PC-9 (cell line): ENCODE measurements at regions of chr20 and their contacts with region 1.

Region 1: GRCh38 chr20:59850018-59850641 is 83.3 kb downstream of the SYCP2 start:
- DNase-seq: no peak
- H3K4me3 ChIP-seq: no peak overlapping the region
- H3K27ac ChIP-seq: no peak overlapping the region
- H3K4me1 ChIP-seq: peaks cover 17% of the 10 kb centered on the region
- H3K27me3 ChIP-seq: no peaks in the 10 kb centered on the region
- CTCF ChIP-seq: peak; percentile 92

Region 2: DNA sequence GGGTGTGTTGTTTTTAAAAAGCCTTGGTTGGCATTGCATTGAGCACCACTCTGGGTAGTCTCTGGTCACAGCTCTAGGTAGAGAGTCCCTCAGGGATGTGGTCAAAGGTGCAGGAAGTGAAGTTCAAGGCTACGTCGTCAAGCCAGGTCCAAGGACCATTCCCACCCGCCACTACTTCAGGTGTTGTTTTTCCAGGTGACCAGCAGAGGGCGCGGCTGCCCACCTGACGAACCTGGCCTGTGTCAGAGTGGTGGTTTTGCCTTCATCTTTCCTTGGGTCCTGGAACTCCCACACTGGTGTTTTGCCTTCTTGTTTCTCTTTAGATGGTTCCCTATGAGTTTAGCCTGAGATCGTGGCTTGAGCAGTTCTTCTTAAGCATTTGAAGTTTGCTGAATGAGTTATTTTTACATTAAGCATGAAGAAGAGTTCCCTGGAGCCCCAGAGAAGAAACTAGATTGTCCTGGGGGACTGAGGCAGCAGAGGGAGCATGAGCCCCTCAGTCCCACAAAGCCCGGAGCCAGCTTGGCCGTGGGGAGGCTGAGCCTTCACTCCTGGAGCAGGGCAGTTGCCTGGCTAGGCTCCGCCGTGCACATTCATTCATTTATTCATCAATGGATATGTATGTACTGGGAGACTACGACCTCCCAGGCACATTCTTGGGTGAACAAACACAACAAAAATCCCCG is 251.4 kb before region 1 on chr20:
- CTCF ChIA-PET with region 1: no interaction called
- POLR2A ChIA-PET with region 1: no interaction called
- intact Hi-C with region 1: loop called (anchors 1 kb)
- DNase-seq: peak in 1 of 2 experiments; percentile 14
- H3K4me3 ChIP-seq: no peak overlapping the region
- H3K27ac ChIP-seq: no peak overlapping the region
- H3K4me1 ChIP-seq: no peaks in the 10 kb centered on the region
- H3K27me3 ChIP-seq: peaks cover 97% of the 10 kb centered on the region
- CTCF ChIP-seq: peak; percentile 96

Region 3: GRCh38 chr20:59743767-59744485 is 106.2 kb before region 1 on chr20:
- CTCF ChIA-PET with region 1: no interaction called
- POLR2A ChIA-PET with region 1: no interaction called
- intact Hi-C with region 1: no loop called
- DNase-seq: peak in 1 of 2 experiments; percentile 9
- H3K4me3 ChIP-seq: no peak overlapping the region
- H3K27ac ChIP-seq: no peak overlapping the region
- H3K4me1 ChIP-seq: no peaks in the 10 kb centered on the region
- H3K27me3 ChIP-seq: peaks cover 100% of the 10 kb centered on the region
- CTCF ChIP-seq: peak; percentile 28; the same call in 1 of the 2 replicates

Region 4: DNA sequence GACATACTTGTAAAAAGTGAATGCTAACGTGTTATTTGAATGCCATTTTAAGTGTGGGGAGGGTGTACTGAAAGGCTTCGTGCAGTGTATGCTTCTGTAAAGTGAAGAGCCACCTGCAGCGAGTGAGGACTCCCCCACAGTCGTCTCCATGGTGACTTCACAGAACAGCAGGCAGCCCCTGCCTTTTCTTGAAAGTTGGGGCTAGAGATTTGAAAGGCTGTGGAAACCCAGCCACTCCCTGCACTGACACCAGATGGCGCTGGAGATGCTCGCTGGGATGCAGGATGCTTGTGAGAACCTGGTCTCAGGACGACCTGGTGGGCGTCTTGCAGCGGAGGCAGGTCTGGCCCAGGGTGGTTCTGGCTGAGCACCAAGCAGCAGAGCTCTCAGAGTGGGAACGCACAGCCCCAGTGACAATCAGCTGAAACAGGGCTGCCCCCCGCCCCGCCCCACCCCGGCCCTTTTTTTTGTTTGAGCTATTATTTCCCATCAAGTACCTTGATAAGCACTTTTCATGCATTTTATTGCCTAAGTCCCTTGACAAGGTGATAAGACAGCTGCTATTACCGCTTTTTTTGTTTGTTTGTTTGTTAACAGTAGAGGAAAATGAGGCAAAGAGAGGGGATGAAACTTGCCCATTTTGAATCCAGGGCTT is 67.0 kb before region 1 on chr20:
- CTCF ChIA-PET with region 1: interaction called, 42 read pairs
- POLR2A ChIA-PET with region 1: no interaction called
- intact Hi-C with region 1: loop called (anchors 1 kb)
- DNase-seq: peak; percentile 45 to 57
- H3K4me3 ChIP-seq: no peak overlapping the region
- H3K27ac ChIP-seq: no peak overlapping the region
- H3K4me1 ChIP-seq: no peaks in the 10 kb centered on the region
- H3K27me3 ChIP-seq: 0 out of 2 replicates have a peak, but pooled peaks cover 3% of the 10 kb centered on the region
- CTCF ChIP-seq: peak; percentile 94

Region 5: DNA sequence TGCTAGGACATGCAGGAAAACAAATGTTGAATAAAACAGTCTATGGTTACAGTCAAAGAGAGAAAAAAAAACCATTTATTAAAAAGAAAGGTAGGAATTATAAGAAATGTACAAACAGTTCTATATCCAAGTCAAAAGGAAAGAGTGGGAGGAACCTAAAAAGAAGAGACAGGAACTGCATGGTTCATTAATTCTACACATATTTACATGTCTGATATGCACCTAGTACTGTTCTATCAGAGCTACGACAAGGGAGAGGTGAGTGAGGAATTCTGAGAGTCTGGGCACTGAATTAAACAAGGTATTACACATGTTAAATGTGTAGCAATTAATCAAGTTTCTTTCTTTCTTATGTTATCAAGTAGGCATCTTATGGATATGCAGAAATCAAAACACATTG is 41.5 kb after region 1 on chr20:
- CTCF ChIA-PET with region 1: no interaction called
- POLR2A ChIA-PET with region 1: no interaction called
- intact Hi-C with region 1: no loop called
- DNase-seq: no peak
- H3K4me3 ChIP-seq: no peak overlapping the region
- H3K27ac ChIP-seq: no peak overlapping the region
- H3K4me1 ChIP-seq: no peaks in the 10 kb centered on the region
- H3K27me3 ChIP-seq: no peaks in the 10 kb centered on the region
- CTCF ChIP-seq: no peak